ENCODE measurements at regions of chr16 and their contacts with region 1.

Region 1: GRCh38 chr16:66650707-66651473 is 45.7 kb downstream of the CMTM4 start:
- DNase-seq: peak; percentile 62 to 91 (median 74)
- ATAC-seq: peak; percentile 100
- H3K4me3 ChIP-seq: peak overlapping the region; percentile 29
- H3K4me3 Mint-ChIP-seq: peak overlapping the region; percentile 57
- H3K27ac ChIP-seq: no peak overlapping the region
- H3K27ac Mint-ChIP-seq: no peak overlapping the region
- H3K4me1 ChIP-seq: peaks cover 6% of the 10 kb centered on the region
- H3K4me1 Mint-ChIP-seq: peaks cover 8% of the 10 kb centered on the region
- H3K27me3 ChIP-seq: peaks cover 0 to 3% of the 10 kb centered on the region in 2 experiments
- H3K27me3 Mint-ChIP-seq: no peaks in the 10 kb centered on the region
- CTCF ChIP-seq: peak; percentile 91

Region 2: GRCh38 chr16:66357153-66357928 is 293.5 kb before region 1 on chr16:
- CTCF ChIA-PET with region 1: no interaction called
- POLR2A ChIA-PET with region 1: no interaction called
- intact Hi-C with region 1: no loop called
- DNase-seq: peak in 6 of 14 experiments; percentile 8 to 57 (median 36)
- ATAC-seq: no peak
- H3K4me3 ChIP-seq: no peak overlapping the region
- H3K4me3 Mint-ChIP-seq: no peak overlapping the region
- H3K27ac ChIP-seq: no peak overlapping the region
- H3K27ac Mint-ChIP-seq: no peak overlapping the region
- H3K4me1 ChIP-seq: peaks cover 6% of the 10 kb centered on the region
- H3K4me1 Mint-ChIP-seq: no peaks in the 10 kb centered on the region
- H3K27me3 ChIP-seq: peaks cover 7 to 24% of the 10 kb centered on the region in 2 experiments
- H3K27me3 Mint-ChIP-seq: peaks cover 61% of the 10 kb centered on the region
- CTCF ChIP-seq: peak; percentile 72

Region 3: GRCh38 chr16:66639091-66639885 is 11.6 kb before region 1 on chr16:
- CTCF ChIA-PET with region 1: interaction called, 17 read pairs
- POLR2A ChIA-PET with region 1: no interaction called
- intact Hi-C with region 1: no loop called
- DNase-seq: no peak
- ATAC-seq: no peak
- H3K4me3 ChIP-seq: no peak overlapping the region
- H3K4me3 Mint-ChIP-seq: no peak overlapping the region
- H3K27ac ChIP-seq: no peak overlapping the region
- H3K27ac Mint-ChIP-seq: no peak overlapping the region
- H3K4me1 ChIP-seq: no peaks in the 10 kb centered on the region
- H3K4me1 Mint-ChIP-seq: no peaks in the 10 kb centered on the region
- H3K27me3 ChIP-seq: peaks cover 0 to 2% of the 10 kb centered on the region in 2 experiments
- H3K27me3 Mint-ChIP-seq: no peaks in the 10 kb centered on the region
- CTCF ChIP-seq: no peak

Region 4: GRCh38 chr16:66696669-66697630 is 46.1 kb after region 1 on chr16 and contains the start of gene CMTM4:
- CTCF ChIA-PET with region 1: interaction called, 6 read pairs
- POLR2A ChIA-PET with region 1: no interaction called
- intact Hi-C with region 1: loop called in 1 of 2 experiments (anchors 5 kb)
- DNase-seq: peak; percentile 42 to 92 (median 72)
- ATAC-seq: peak; percentile 95
- H3K4me3 ChIP-seq: peak within 1 kb of the TSS; percentile 73
- H3K4me3 Mint-ChIP-seq: peak within 1 kb of the TSS; percentile 90
- H3K27ac ChIP-seq: no peak within 1 kb of the TSS
- H3K27ac Mint-ChIP-seq: peak within 1 kb of the TSS; percentile 63
- H3K4me1 ChIP-seq: peaks cover 16% of the 10 kb centered on the region
- H3K4me1 Mint-ChIP-seq: peaks cover 14% of the 10 kb centered on the region
- H3K27me3 ChIP-seq: peaks cover 0 to 4% of the 10 kb centered on the region in 2 experiments
- H3K27me3 Mint-ChIP-seq: peaks cover 4% of the 10 kb centered on the region
- CTCF ChIP-seq: no peak
- total RNA-seq, gene CMTM4: 1.1 to 1.6 TPM

Region 5: DNA sequence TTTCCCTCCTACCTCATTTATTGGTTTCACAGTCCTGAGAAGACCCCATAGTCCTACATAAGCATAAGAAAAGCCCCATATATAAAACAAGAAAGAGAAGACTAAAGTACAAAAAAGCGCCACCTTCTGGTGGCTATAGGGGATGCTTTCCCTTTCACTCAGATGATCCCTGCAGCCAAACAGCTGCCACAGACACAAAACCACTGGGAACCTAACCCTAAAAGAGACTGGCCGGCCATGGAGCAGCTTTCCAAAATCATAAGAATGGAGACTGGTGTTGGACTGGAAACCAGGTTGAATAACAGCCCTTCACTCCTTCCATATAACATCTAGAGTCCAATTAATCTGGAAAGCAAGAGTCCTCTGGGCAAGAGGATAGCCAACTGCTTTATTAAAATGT is 89.1 kb after region 1 on chr16:
- CTCF ChIA-PET with region 1: interaction called, 8 read pairs
- POLR2A ChIA-PET with region 1: no interaction called
- intact Hi-C with region 1: loop called in 1 of 2 experiments (anchors 5 kb)
- DNase-seq: peak in 8 of 14 experiments; percentile 5 to 67 (median 18)
- ATAC-seq: peak; percentile 64
- H3K4me3 ChIP-seq: no peak overlapping the region
- H3K4me3 Mint-ChIP-seq: no peak overlapping the region
- H3K27ac ChIP-seq: no peak overlapping the region
- H3K27ac Mint-ChIP-seq: peak overlapping the region; percentile 45
- H3K4me1 ChIP-seq: peaks cover 17% of the 10 kb centered on the region
- H3K4me1 Mint-ChIP-seq: peaks cover 24% of the 10 kb centered on the region
- H3K27me3 ChIP-seq: no peaks in the 10 kb centered on the region
- H3K27me3 Mint-ChIP-seq: no peaks in the 10 kb centered on the region
- CTCF ChIP-seq: peak; percentile 70

Measured in CD4-positive, alpha-beta T cell (primary cell).